ENCODE measurements at regions of chr6 and their contacts with region 1.

Region 1: DNA sequence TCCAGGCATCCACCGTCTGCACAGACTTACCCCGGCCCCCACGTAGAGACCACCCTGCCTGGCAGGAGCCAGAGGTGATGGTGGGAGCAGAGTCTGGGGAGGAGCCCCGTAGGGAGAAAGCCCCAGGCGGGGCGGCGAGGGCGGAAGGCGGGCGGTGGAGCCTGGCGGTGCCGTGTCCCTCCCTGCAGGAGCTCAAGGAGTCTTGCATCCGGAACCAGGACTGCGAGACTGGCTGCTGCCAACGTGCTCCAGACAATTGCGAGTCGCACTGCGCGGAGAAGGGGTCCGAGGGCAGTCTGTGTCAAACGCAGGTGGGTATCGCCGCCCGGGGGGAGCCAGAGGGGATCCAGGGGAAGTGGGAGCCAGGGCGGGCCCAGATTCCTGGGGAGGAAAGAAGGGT is 6.0 kb downstream of the CLPSL1 start:
- DNase-seq: no peak
- H3K4me3 ChIP-seq: no peak overlapping the region
- H3K27ac ChIP-seq: no peak overlapping the region
- H3K4me1 ChIP-seq: no peaks in the 10 kb centered on the region
- H3K27me3 ChIP-seq: peaks cover 0 to 62% of the 10 kb centered on the region in 2 donors
- CTCF ChIP-seq: no peak

Region 2: GRCh38 chr6:35797837-35798526 is 11.2 kb after region 1 on chr6:
- intact Hi-C with region 1: loop called (anchors 1 kb)
- DNase-seq: no peak
- H3K4me3 ChIP-seq: no peak overlapping the region
- H3K27ac ChIP-seq: no peak overlapping the region
- H3K4me1 ChIP-seq: no peaks in the 10 kb centered on the region
- H3K27me3 ChIP-seq: peaks cover 0 to 36% of the 10 kb centered on the region in 2 donors
- CTCF ChIP-seq: no peak

Measured in tibial artery (tissue), 4 donors.